OCI-LY7 (cell line): ENCODE measurements at regions of chr11 and their contacts with region 1.

Region 1: DNA sequence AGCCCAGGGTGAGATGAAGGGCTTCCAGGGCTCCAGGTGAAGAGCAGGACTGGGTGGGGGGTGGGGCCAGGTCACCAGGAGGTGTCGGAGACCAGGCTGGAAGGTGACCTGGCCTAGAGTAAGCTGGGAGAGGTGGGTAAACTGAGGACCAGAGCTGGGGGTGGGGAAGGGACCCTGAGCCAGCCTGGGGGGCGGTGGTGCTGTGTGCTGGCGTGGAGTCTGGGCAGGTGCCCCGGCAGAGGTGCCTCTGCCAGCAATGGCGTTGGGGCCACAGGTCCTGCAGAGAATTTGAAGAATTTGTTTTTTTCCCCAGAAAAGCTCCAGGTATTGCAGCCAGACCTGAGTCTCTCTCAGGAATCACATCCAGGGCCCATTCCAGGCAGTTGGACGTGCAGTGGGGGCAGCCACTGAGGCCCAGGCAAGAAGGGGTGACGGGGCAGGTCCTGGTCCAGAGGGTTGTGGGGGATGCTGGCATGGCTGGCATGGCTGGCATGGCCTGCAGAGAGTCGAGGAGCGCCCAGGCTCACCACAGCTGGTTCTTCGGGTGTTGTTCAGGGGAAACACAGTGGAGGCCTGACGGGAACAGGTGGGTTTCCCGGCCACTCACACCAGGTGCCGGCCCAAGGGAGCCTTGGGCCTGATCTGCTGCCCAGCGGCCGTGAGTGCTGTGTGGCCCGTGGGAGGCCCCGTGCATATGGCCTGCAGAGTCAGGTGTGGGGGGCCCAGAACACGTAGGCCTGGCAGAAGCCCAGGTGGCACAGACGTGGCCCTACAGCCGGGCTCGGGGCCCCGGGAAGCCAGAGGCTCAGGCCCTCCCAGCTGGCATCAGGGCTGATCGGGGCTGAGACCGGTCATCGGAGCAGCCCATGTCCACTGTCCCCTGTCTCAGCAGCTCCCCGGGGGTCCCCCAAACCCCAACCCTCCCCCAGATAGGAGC is 6.4 kb upstream of the MUC6 start:
- DNase-seq: no peak
- H3K4me3 ChIP-seq: no peak overlapping the region
- H3K27ac ChIP-seq: no peak overlapping the region
- H3K4me1 ChIP-seq: no peaks in the 10 kb centered on the region
- CTCF ChIP-seq: no peak

Region 2: GRCh38 chr11:587978-588380 is 454.9 kb before region 1 on chr11:
- CTCF ChIA-PET with region 1: interaction called, 11 read pairs
- POLR2A ChIA-PET with region 1: no interaction called
- intact Hi-C with region 1: no loop called
- DNase-seq: no peak
- H3K4me3 ChIP-seq: no peak overlapping the region
- H3K27ac ChIP-seq: no peak overlapping the region
- H3K4me1 ChIP-seq: no peaks in the 10 kb centered on the region
- CTCF ChIP-seq: no peak